Activated naive CD4-positive, alpha-beta T cell treated with anti-CD3 and anti-CD28 coated beads, Interleukin-2, amount 10 ng/mL, durations not matched to agents 7 days and 5 days (primary cell): ENCODE measurements at regions of chr15 and their contacts with region 1.

Region 1: GRCh38 chr15:81106560-81106959 is 27.5 kb upstream of the CFAP161 start:
- DNase-seq: peak; percentile 57
- H3K4me3 Mint-ChIP-seq: no peak overlapping the region
- H3K27ac Mint-ChIP-seq: no peak overlapping the region
- H3K4me1 Mint-ChIP-seq: peaks cover 3% of the 10 kb centered on the region
- H3K27me3 Mint-ChIP-seq: peaks cover 63% of the 10 kb centered on the region

Region 2: DNA sequence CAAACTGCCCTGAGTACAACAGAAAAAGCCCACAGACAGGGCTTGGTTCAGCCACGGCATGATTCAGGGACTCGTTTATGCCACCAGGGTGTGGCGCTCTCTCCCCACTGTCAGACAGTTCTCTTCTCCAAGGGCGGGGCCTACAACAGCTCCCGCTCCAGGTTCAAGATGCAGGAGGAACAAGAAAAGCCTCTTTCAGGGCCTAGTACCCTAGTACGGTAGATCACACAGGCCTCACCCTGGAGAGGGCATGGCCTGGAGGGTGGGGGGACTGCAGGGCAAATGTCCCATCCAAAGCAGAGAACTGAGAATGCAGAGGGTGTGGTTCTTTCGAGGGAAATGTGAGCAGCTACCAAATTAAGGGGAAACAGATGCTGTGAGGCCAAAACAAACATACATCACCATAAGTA is 128.9 kb before region 1 on chr15:
- CTCF ChIA-PET with region 1: interaction called, 11 read pairs
- DNase-seq: peak; percentile 59
- H3K4me3 Mint-ChIP-seq: no peak overlapping the region
- H3K27ac Mint-ChIP-seq: no peak overlapping the region
- H3K4me1 Mint-ChIP-seq: peaks cover 46% of the 10 kb centered on the region
- H3K27me3 Mint-ChIP-seq: no peaks in the 10 kb centered on the region

Region 3: DNA sequence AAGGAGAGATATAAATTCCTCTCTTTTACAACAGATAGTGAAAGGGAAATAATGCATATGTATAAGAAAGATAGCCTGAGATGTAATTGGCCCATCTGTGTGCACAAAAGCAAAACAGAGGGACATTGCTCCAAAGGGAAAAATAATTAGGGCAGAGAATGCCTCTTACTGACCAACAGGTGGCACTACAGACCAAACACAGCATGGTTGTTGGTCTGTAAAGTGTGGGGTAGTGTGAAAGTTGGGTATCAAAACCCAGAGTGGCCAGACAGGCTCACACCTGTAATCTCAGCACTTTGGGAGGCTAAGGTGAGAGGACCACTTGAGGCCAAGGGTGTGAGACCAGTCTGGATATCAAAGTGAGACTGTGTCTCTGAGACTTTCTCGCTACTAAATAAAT is 110.3 kb before region 1 on chr15:
- CTCF ChIA-PET with region 1: interaction called, 21 read pairs
- DNase-seq: no peak
- H3K4me3 Mint-ChIP-seq: no peak overlapping the region
- H3K27ac Mint-ChIP-seq: no peak overlapping the region
- H3K4me1 Mint-ChIP-seq: peaks cover 60% of the 10 kb centered on the region
- H3K27me3 Mint-ChIP-seq: no peaks in the 10 kb centered on the region

Region 4: DNA sequence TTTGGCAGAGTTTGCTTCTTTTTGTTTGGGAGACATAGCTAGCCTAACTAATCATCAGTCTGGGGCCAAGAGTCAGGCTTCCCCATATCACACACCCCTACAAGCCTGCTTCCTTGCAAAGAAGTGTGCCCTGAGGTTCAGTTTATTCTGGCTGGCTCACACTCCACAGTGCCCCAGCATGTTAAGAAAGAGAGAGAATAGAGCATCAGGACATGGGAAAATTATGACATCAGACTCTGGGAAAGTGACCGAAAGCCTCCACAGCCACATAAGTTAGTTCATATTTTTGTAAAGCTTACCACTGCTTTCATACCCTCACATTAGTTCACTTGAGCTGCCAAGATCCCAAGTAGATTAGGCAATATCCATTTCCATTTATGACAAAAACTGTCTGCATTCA is 35.4 kb before region 1 on chr15:
- CTCF ChIA-PET with region 1: no interaction called
- DNase-seq: no peak
- H3K4me3 Mint-ChIP-seq: no peak overlapping the region
- H3K27ac Mint-ChIP-seq: no peak overlapping the region
- H3K4me1 Mint-ChIP-seq: peaks cover 27% of the 10 kb centered on the region
- H3K27me3 Mint-ChIP-seq: peaks cover 23% of the 10 kb centered on the region

Region 5: DNA sequence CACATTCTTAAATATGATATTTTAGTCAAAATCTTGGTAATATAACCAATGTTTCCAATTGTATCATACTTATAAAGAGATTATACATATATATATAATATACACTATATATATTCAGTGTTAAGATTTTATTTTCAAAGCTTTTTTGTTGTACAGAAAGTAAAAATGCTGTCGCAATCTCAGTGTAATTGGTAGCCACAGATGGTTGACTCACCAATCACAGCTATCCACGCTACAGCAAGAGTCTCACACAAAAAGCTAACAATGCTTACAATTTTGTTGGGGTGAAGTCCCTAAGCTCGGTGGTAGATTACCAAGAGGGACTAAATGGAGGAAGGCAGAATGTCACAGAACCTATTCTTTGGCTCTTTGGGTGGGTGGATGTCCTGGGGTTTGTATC is 10.6 kb after region 1 on chr15:
- CTCF ChIA-PET with region 1: interaction called, 24 read pairs
- DNase-seq: no peak
- H3K4me3 Mint-ChIP-seq: no peak overlapping the region
- H3K27ac Mint-ChIP-seq: no peak overlapping the region
- H3K4me1 Mint-ChIP-seq: no peaks in the 10 kb centered on the region
- H3K27me3 Mint-ChIP-seq: peaks cover 47% of the 10 kb centered on the region

Region 6: DNA sequence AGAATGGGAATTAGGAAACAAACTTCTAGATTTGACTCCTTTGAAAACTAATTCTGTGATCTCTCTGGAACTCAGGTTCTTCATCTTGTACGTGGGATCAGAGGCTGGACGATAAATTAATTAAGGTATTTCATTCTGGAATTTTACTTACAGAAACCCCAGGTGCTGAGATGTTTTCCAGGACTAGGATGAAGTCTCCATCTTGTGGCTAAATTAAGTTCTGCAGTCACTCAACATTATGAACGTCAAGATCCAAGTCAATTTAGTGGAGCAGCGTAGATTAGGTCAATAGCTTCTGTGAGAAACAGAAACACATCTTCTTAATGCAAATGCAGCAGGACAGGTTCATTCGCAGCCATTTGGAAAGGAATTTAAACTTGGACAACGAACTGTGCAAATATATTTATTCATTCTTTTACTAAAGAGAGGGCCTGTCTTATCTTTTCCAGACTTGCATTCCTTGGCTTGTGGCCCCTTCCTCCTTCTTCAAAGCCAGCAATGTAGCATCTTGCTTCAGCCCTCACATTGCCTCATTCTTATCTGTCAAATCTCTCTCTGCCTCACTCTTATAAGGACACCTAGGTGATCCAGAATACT is 294.2 kb after region 1 on chr15:
- CTCF ChIA-PET with region 1: interaction called, 10 read pairs
- DNase-seq: no peak
- H3K4me3 Mint-ChIP-seq: no peak overlapping the region
- H3K27ac Mint-ChIP-seq: no peak overlapping the region
- H3K4me1 Mint-ChIP-seq: no peaks in the 10 kb centered on the region
- H3K27me3 Mint-ChIP-seq: no peaks in the 10 kb centered on the region